Mammary epithelial cell (primary cell): ENCODE measurements at regions of chr1 and their contacts with region 1.

Region 1: GRCh38 chr1:208029381-208030287 is 118.7 kb upstream of the CD34 start:
- DNase-seq: no peak
- H3K4me3 ChIP-seq: no peak overlapping the region
- H3K27ac ChIP-seq: no peak overlapping the region
- H3K4me1 ChIP-seq: no peaks in the 10 kb centered on the region
- H3K27me3 ChIP-seq: no peaks in the 10 kb centered on the region
- CTCF ChIP-seq: no peak

Region 2: DNA sequence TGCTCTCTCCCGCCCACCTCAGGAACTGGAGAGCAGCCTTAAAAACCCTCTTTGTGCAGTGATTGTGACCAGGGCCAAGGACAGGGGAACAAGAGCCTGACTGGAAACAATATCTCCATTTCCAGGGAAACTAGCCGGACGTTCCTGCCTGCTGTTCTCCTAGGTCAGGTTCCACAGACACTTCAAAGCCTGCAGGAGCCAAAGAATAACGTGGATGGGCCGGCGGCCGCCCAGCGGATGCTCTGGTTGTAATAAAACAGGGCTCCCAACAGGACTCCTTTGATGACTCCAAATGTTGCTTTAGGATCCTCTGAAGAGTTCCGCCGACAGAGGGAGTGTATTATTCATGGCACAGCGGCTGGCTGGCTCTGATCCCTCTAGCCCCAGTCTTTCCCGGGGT is 52.3 kb after region 1 on chr1:
- CTCF ChIA-PET with region 1: no interaction called
- dilution Hi-C with region 1: loop called (anchors 5 kb)
- in situ Hi-C with region 1: no loop called
- intact Hi-C with region 1: no loop called
- DNase-seq: no peak
- H3K4me3 ChIP-seq: no peak overlapping the region
- H3K27ac ChIP-seq: no peak overlapping the region
- H3K4me1 ChIP-seq: peaks cover 6% of the 10 kb centered on the region
- H3K27me3 ChIP-seq: no peaks in the 10 kb centered on the region
- CTCF ChIP-seq: no peak

Region 3: GRCh38 chr1:208192995-208193394 is 163.4 kb after region 1 on chr1:
- CTCF ChIA-PET with region 1: no interaction called
- dilution Hi-C with region 1: no loop called
- in situ Hi-C with region 1: no loop called
- intact Hi-C with region 1: no loop called
- DNase-seq: no peak
- H3K4me3 ChIP-seq: no peak overlapping the region
- H3K27ac ChIP-seq: no peak overlapping the region
- H3K4me1 ChIP-seq: peaks cover 6% of the 10 kb centered on the region
- H3K27me3 ChIP-seq: no peaks in the 10 kb centered on the region
- CTCF ChIP-seq: no peak

Region 4: GRCh38 chr1:208203127-208203847 is 173.7 kb after region 1 on chr1:
- CTCF ChIA-PET with region 1: no interaction called
- dilution Hi-C with region 1: no loop called
- in situ Hi-C with region 1: no loop called
- intact Hi-C with region 1: no loop called
- DNase-seq: peak; percentile 28
- H3K4me3 ChIP-seq: no peak overlapping the region
- H3K27ac ChIP-seq: no peak overlapping the region
- H3K4me1 ChIP-seq: peaks cover 44% of the 10 kb centered on the region
- H3K27me3 ChIP-seq: no peaks in the 10 kb centered on the region
- CTCF ChIP-seq: no peak

Region 5: GRCh38 chr1:208251911-208252835 is 222.5 kb after region 1 on chr1:
- CTCF ChIA-PET with region 1: no interaction called
- dilution Hi-C with region 1: no loop called
- in situ Hi-C with region 1: loop called (anchors 5 to 10 kb)
- intact Hi-C with region 1: no loop called
- DNase-seq: no peak
- H3K4me3 ChIP-seq: no peak overlapping the region
- H3K27ac ChIP-seq: no peak overlapping the region
- H3K4me1 ChIP-seq: peaks cover 26% of the 10 kb centered on the region
- H3K27me3 ChIP-seq: peaks cover 5% of the 10 kb centered on the region
- CTCF ChIP-seq: no peak